ENCODE measurements at regions of chr17 and their contacts with region 1.

Region 1: GRCh38 chr17:17877529-17878358 is 41.0 kb upstream of the SREBF1 start:
- DNase-seq: no peak
- H3K4me3 Mint-ChIP-seq: no peak overlapping the region
- H3K27ac Mint-ChIP-seq: no peak overlapping the region
- H3K4me1 Mint-ChIP-seq: peaks cover 5% of the 10 kb centered on the region
- H3K27me3 Mint-ChIP-seq: no peaks in the 10 kb centered on the region
- CTCF ChIP-seq: no peak

Region 2: DNA sequence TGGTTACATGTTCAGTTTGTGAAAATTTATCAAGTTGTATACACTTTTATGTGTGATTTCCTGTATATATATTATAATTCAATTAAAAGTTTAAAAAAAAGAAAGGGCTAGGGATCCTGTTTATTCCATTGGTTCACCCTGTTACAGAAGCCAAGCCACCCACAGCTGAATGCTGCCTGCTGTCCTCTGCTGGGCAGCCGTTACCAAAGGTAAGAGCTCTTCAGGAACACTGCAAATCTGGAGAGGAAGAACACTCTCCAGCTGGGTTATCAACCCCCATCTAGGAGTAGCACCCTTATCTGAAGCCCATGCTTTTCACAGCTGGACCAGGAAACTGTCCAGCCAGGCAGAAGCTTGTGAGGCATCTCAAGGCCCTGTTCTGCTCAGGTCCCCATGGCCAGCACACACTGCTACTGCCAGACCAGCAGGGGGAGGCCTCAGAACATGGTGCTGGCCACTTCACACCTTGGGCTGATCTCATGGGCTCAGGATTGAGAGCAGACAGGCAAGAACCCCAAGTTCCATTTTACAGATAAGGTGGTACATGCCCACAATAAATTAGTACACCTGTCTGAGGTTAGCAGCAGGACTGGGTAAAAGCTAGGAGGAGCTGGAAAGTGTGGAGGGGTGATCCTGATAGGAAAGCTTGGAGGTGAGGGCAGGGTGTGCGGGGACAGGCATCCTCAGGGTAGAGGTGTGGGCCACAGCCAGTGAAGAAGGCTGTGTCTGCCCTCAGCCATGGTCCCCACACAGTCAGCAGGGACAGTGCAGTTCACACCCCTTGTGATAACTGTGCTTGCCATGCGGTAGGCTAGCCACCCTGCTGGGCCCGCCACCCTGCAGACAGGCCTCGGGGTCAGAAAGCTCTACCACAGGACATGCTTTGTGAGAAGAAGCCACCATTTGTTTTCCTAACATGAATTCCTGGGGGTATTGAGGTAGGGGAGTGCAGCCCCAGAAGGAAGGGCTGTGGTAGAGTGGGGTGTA is 13.3 kb after region 1 on chr17:
- CTCF ChIA-PET with region 1: interaction called, 10 read pairs
- POLR2A ChIA-PET with region 1: no interaction called
- intact Hi-C with region 1: no loop called
- DNase-seq: peak; percentile 71
- H3K4me3 Mint-ChIP-seq: no peak overlapping the region
- H3K27ac Mint-ChIP-seq: peak overlapping the region; percentile 21
- H3K4me1 Mint-ChIP-seq: no peaks in the 10 kb centered on the region
- H3K27me3 Mint-ChIP-seq: no peaks in the 10 kb centered on the region
- CTCF ChIP-seq: peak; percentile 77

Region 3: GRCh38 chr17:17907469-17907868 is 29.7 kb after region 1 on chr17:
- CTCF ChIA-PET with region 1: no interaction called
- POLR2A ChIA-PET with region 1: no interaction called
- intact Hi-C with region 1: no loop called
- DNase-seq: no peak
- H3K4me3 Mint-ChIP-seq: no peak overlapping the region
- H3K27ac Mint-ChIP-seq: no peak overlapping the region
- H3K4me1 Mint-ChIP-seq: no peaks in the 10 kb centered on the region
- H3K27me3 Mint-ChIP-seq: no peaks in the 10 kb centered on the region
- CTCF ChIP-seq: no peak